ENCODE measurements at regions of chr22 and their contacts with region 1.

Region 1: GRCh38 chr22:19730655-19731360 is 7.5 kb downstream of the GP1BB start:
- DNase-seq: no peak
- H3K4me3 ChIP-seq: peak overlapping the region; percentile 61
- CTCF ChIP-seq: peak; percentile 99

Region 2: GRCh38 chr22:19663286-19663815 is 67.5 kb before region 1 on chr22:
- CTCF ChIA-PET with region 1: no interaction called
- POLR2A ChIA-PET with region 1: no interaction called
- DNase-seq: peak; percentile 51
- H3K4me3 ChIP-seq: no peak overlapping the region
- CTCF ChIP-seq: no peak

Region 3: DNA sequence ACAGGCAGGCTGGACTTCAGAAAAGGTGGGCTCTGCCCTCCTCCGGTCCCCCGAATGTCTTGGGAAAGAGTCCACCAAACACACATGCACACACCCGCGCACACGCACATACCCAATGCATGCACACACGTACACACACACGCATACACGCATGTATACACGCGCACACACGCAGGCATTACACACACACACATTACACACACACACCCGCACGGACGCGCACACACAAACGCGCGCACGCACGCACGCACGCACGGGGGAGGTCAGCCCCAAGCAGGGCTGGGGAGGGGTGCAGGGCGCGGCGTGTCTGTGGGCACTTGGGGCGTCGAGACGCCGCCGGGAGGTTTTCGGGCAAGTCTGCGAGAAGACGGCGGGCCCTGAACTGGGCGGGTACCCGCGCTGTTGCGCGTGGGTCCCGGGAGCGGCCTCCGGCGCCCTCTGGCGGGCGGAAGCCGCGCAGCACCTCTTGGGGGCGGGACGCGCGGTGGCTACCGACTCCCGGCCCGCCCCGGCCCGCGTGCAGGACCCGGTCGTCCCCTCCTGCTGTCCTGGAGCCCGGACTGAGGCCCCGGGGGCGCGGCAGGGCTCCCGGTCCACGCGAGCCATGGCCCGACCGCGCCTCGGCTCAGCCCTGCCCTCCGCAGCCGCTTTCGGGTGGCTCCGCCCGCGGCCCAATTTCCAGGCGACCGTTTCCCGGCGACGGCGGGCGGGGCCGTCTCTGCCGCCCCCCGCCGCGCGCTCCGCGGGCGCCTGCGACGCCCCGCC is 12.9 kb before region 1 on chr22:
- CTCF ChIA-PET with region 1: interaction called, 32 read pairs
- POLR2A ChIA-PET with region 1: no interaction called
- DNase-seq: no peak
- H3K4me3 ChIP-seq: peak overlapping the region; percentile 73
- CTCF ChIP-seq: peak; percentile 91

Region 4: DNA sequence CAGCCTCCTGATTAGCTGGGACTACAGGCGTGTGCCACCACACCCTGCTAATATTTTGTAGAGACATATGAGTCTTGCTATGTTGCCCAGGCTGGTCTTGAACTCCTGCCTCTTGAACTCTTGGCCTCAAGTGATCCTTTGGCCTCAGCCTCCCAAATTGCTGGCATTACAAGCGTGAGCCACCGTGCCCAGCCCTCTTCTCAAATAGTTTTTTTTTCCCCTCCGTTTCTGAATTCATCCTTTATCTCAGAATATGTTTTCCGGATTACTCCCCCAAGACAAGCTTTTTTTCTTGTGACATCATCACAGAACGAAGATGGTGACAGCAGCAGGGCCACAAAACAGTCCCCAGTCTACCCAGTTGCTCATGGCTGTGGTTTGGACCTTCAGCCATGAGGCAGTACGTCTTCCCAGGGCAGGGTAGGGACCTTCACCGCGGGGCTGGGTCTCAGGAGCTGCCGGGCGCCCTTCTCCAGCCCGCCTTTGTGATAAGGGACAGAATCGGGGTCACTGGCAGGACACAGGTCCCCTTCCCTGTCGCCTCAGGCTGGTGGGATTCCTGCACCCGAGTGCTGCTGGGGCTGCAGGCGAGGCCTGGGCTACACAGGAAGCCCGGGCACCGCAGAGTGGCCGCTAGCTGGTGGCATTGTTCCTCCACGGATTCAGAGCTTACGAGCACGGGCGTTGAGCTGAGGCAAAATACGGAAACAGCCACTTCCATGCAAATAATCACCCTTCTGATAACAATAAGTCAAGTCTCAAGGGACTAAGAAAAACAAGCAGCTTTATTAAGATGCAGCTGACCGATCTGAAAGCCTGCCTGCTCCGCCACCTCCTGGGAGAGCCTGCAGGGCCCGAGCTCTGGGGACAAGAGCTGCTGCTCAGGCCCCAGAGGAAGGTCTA is 41.9 kb after region 1 on chr22:
- CTCF ChIA-PET with region 1: interaction called, 10 read pairs
- POLR2A ChIA-PET with region 1: no interaction called
- DNase-seq: no peak
- H3K4me3 ChIP-seq: no peak overlapping the region
- CTCF ChIP-seq: no peak

Region 5: GRCh38 chr22:19891317-19892256 is 160.8 kb after region 1 on chr22:
- CTCF ChIA-PET with region 1: interaction called, 58 read pairs
- POLR2A ChIA-PET with region 1: no interaction called
- DNase-seq: no peak
- H3K4me3 ChIP-seq: no peak overlapping the region
- CTCF ChIP-seq: no peak

Region 6: GRCh38 chr22:19909350-19910179 is 178.8 kb after region 1 on chr22:
- CTCF ChIA-PET with region 1: interaction called, 444 read pairs
- POLR2A ChIA-PET with region 1: interaction called, 7 read pairs
- DNase-seq: peak; percentile 5
- H3K4me3 ChIP-seq: no peak overlapping the region
- CTCF ChIP-seq: peak; percentile 89

Region 7: DNA sequence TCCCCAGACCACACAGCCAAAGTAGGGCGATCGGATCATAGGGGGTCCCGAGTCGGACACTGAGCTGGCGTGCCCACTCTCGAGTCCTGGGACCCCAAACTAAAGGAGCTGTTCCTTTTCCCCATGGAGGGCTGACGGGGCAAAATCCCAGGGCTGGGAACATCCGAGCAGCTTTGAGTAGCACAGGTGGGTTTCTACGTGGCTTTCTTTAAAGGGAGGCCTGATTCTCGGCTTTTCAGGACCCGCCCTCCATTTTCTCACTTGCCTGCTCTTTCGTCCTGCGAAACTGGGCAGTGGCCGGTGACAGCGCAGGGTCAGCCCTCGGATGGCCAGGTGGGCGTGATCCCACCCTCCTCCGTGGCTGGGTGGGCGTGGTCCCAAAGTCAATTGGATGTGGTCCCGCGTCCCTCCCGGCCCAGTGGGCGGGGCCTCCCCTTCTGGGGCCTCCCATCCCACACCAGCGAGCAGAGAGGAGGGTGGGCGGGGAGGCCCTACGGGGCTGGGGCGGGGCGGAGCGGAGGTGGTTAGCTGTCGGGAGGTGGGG is 228.3 kb after region 1 on chr22:
- CTCF ChIA-PET with region 1: interaction called, 10 read pairs
- POLR2A ChIA-PET with region 1: no interaction called
- DNase-seq: no peak
- H3K4me3 ChIP-seq: peak overlapping the region; percentile 23; the same call in 1 of the 2 replicates
- CTCF ChIP-seq: no peak

Measured in AG04449 (cell line).